Activated B cell treated with CpG ODN at 0.5 μM for 24 hours (primary cell): ENCODE measurements at regions of chr11 and their contacts with region 1.

Region 1: GRCh38 chr11:117985953-117986887 is at the start of gene IL10RA:
- DNase-seq: peak; percentile 93
- ATAC-seq: peak; percentile 89
- H3K4me3 Mint-ChIP-seq: peak within 1 kb of the TSS; percentile 90
- H3K27ac Mint-ChIP-seq: peak within 1 kb of the TSS; percentile 96
- H3K4me1 Mint-ChIP-seq: peaks cover 89% of the 10 kb centered on the region
- H3K27me3 Mint-ChIP-seq: no peaks in the 10 kb centered on the region
- CTCF ChIP-seq: no peak
- total RNA-seq, gene IL10RA: 303 and 350 TPM in 2 replicates

Region 2: DNA sequence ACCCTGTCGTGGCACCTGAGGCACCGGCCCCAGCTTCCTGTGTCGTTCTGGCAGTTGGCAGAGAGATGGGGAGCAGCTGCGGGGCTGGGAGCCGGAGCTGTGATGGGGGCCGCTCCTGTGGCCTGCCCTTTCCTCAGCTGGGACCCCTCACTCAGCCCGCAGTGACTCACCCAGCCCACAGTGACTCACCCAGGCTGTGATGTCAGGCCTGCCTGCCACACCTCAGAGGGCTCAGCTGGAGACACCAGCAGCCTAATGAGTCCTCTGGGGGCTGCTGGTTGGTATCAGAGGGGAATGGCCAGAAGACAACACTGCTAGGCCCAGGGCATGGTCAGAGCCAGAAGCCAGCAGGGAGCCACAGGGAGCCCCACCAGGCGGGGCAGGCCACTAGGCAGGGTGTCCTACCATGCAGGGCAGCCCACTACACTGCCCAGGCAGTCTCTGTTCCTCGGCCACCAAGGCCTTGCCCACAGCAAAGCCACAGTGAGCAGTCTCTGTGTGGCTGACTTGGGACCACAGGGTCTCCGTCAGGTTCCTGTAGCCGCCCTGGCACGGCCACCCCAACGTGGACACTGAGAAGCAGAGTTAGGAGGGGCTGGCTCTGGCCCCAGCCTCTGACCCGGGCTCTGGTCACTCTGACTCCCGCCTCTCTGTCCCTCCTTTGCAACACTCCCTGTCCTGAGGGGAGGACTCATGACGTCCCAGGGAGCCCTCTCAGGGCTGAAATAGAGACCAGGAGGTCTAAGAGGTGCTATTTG is 157.4 kb before region 1 on chr11:
- CTCF ChIA-PET with region 1: interaction called, 5 read pairs
- POLR2A ChIA-PET with region 1: interaction called, 12 read pairs
- intact Hi-C with region 1: no loop called
- DNase-seq: peak; percentile 79
- ATAC-seq: peak; percentile 89
- H3K4me3 Mint-ChIP-seq: peak overlapping the region; percentile 44
- H3K27ac Mint-ChIP-seq: peak overlapping the region; percentile 80
- H3K4me1 Mint-ChIP-seq: peaks cover 51% of the 10 kb centered on the region
- H3K27me3 Mint-ChIP-seq: peaks cover 23% of the 10 kb centered on the region
- CTCF ChIP-seq: no peak

Region 3: GRCh38 chr11:117959438-117960149 is 26.6 kb before region 1 on chr11:
- CTCF ChIA-PET with region 1: interaction called, 3 read pairs
- POLR2A ChIA-PET with region 1: interaction called, 930 read pairs
- intact Hi-C with region 1: no loop called
- DNase-seq: no peak
- ATAC-seq: peak; percentile 47
- H3K4me3 Mint-ChIP-seq: peak overlapping the region; percentile 0
- H3K27ac Mint-ChIP-seq: peak overlapping the region; percentile 64
- H3K4me1 Mint-ChIP-seq: peaks cover 23% of the 10 kb centered on the region
- H3K27me3 Mint-ChIP-seq: no peaks in the 10 kb centered on the region
- CTCF ChIP-seq: no peak

Region 4: GRCh38 chr11:118002541-118003423 is 16.6 kb after region 1 on chr11:
- CTCF ChIA-PET with region 1: interaction called, 13 read pairs
- POLR2A ChIA-PET with region 1: interaction called, 1,422 read pairs
- intact Hi-C with region 1: loop called (anchors 1 kb)
- DNase-seq: no peak
- ATAC-seq: peak; percentile 21
- H3K4me3 Mint-ChIP-seq: peak overlapping the region; percentile 52
- H3K27ac Mint-ChIP-seq: peak overlapping the region; percentile 98
- H3K4me1 Mint-ChIP-seq: peaks cover 93% of the 10 kb centered on the region
- H3K27me3 Mint-ChIP-seq: no peaks in the 10 kb centered on the region
- CTCF ChIP-seq: no peak

Region 5: GRCh38 chr11:118010738-118011461 is 24.7 kb after region 1 on chr11:
- CTCF ChIA-PET with region 1: interaction called, 4 read pairs
- POLR2A ChIA-PET with region 1: interaction called, 1,422 read pairs
- intact Hi-C with region 1: loop called (anchors 1 kb)
- DNase-seq: peak; percentile 77
- ATAC-seq: peak; percentile 67
- H3K4me3 Mint-ChIP-seq: peak overlapping the region; percentile 66
- H3K27ac Mint-ChIP-seq: peak overlapping the region; percentile 98
- H3K4me1 Mint-ChIP-seq: peaks cover 100% of the 10 kb centered on the region
- H3K27me3 Mint-ChIP-seq: no peaks in the 10 kb centered on the region
- CTCF ChIP-seq: no peak

Region 6: DNA sequence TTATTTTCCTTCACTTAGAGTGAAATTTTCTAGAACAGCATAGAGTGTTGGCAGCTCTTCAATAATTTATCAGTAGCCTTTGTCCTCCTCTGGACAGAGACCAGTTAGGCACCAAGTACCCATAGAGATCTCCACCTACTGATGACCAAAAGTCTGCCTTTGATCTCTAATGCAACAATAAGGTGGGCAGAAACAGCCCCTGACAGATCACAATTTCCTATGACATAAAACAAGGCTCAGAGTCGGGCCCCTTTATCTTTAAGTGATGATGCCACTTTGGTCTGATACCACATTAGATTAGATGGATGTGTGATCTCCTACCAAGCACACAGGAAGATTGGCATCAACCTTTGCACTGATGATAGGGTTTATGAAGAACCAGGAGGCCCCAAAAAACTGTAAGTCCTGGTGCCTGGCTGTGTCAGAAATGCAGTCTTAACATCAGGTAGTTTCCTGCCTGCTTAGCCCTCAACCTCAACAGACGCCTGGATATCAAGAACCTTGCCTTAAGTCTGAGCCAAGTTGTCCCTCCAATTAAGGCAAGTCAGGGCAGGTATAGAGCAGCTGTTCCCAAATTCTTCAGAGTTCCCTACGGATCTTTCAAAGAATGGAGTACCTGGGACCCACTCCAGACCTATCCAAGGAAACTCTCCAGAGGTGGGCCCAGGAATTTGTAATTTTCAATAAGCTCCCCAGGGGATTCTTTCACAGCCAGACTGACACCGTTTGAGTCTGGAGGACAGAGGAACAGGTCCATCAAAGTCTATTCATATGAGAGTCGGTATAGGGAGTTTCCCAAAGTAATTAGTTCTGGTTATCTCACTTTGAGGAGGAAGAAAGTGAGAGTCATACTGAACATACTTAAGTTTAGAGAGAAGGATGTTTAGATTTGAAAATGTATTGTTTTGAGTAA is 60.1 kb after region 1 on chr11:
- CTCF ChIA-PET with region 1: interaction called, 45 read pairs
- POLR2A ChIA-PET with region 1: interaction called, 111 read pairs
- intact Hi-C with region 1: no loop called
- DNase-seq: no peak
- ATAC-seq: peak; percentile 53
- H3K4me3 Mint-ChIP-seq: no peak overlapping the region
- H3K27ac Mint-ChIP-seq: peak overlapping the region; percentile 56
- H3K4me1 Mint-ChIP-seq: peaks cover 40% of the 10 kb centered on the region
- H3K27me3 Mint-ChIP-seq: no peaks in the 10 kb centered on the region
- CTCF ChIP-seq: no peak

Region 7: DNA sequence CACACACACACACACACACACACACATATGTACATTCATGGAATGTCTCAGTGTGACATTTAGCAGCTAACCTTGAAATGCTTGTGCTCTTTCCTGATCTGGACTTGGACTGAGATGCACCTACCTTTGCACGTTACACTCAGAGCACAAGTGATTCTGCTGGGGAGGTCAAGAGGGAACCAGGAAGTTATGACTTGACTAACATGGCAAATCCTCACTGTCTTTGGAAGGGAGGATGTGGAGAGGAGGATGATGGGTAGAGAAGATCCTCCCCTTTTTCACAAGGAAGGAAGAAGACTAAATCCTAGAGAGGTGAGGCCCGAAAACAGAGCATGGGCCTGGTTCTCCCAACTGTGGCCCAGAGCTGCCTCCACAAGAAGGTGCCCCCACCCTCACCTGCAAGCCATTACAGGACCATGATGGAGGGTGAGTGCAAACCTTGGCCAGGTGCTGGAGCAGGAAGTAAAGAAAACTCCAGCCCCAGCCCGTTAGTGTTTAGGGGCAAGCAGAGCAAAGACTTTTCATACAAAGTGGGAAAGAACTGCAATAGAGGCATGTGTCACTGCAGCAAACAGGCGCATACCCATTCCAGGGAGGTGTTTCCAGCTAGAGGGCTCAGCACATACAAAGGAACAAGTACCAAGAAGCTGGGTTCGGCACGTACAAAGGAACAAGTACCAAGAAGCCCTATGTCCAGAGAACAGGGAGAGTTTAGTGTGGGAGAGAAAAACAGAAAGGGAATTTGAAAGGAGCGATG is 140.0 kb after region 1 on chr11:
- CTCF ChIA-PET with region 1: no interaction called
- POLR2A ChIA-PET with region 1: no interaction called
- intact Hi-C with region 1: no loop called
- DNase-seq: no peak
- ATAC-seq: no peak
- H3K4me3 Mint-ChIP-seq: no peak overlapping the region
- H3K27ac Mint-ChIP-seq: no peak overlapping the region
- H3K4me1 Mint-ChIP-seq: no peaks in the 10 kb centered on the region
- H3K27me3 Mint-ChIP-seq: peaks cover 12% of the 10 kb centered on the region
- CTCF ChIP-seq: no peak

Region 8: GRCh38 chr11:118295834-118296454 is 309.7 kb after region 1 on chr11:
- CTCF ChIA-PET with region 1: no interaction called
- POLR2A ChIA-PET with region 1: no interaction called
- intact Hi-C with region 1: no loop called
- DNase-seq: no peak
- ATAC-seq: peak; percentile 34
- H3K4me3 Mint-ChIP-seq: no peak overlapping the region
- H3K27ac Mint-ChIP-seq: no peak overlapping the region
- H3K4me1 Mint-ChIP-seq: no peaks in the 10 kb centered on the region
- H3K27me3 Mint-ChIP-seq: peaks cover 11% of the 10 kb centered on the region
- CTCF ChIP-seq: peak; percentile 44